Ovary (tissue), 10 donors: ENCODE measurements at regions of chr1 and their contacts with region 1.

Region 1: GRCh38 chr1:46003315-46003714 is 129.1 kb downstream of the PIK3R3 start:
- DNase-seq: no peak
- H3K4me3 ChIP-seq: no peak overlapping the region
- H3K27ac ChIP-seq: no peak overlapping the region
- H3K4me1 ChIP-seq: no peaks in the 10 kb centered on the region
- H3K27me3 ChIP-seq: no peaks in the 10 kb centered on the region
- CTCF ChIP-seq: no peak
- EP300 ChIP-seq: no peak
- POLR2A ChIP-seq: no peak

Region 2: GRCh38 chr1:46026531-46026930 is 23.2 kb after region 1 on chr1:
- intact Hi-C with region 1: loop called in 1 of 4 experiments (anchors 2 kb)
- DNase-seq: no peak
- H3K4me3 ChIP-seq: no peak overlapping the region
- H3K27ac ChIP-seq: no peak overlapping the region
- H3K4me1 ChIP-seq: no peaks in the 10 kb centered on the region
- H3K27me3 ChIP-seq: no peaks in the 10 kb centered on the region
- CTCF ChIP-seq: no peak
- EP300 ChIP-seq: no peak
- POLR2A ChIP-seq: no peak